Activated T-helper 1 cell treated with anti-CD3 and anti-CD28 coated beads, Interleukin-12 subunit alpha, Interleukin-12 subunit beta, Interleukin-2, Interleukin-4 antibody, amounts not matched to agents 30 ng/mL and 10 ng/mL and 1 ng/mL, durations not matched to agents 14 hours and 24 hours and 36 hours (primary cell): ENCODE measurements at regions of chr4 and their contacts with region 1.

Region 1: DNA sequence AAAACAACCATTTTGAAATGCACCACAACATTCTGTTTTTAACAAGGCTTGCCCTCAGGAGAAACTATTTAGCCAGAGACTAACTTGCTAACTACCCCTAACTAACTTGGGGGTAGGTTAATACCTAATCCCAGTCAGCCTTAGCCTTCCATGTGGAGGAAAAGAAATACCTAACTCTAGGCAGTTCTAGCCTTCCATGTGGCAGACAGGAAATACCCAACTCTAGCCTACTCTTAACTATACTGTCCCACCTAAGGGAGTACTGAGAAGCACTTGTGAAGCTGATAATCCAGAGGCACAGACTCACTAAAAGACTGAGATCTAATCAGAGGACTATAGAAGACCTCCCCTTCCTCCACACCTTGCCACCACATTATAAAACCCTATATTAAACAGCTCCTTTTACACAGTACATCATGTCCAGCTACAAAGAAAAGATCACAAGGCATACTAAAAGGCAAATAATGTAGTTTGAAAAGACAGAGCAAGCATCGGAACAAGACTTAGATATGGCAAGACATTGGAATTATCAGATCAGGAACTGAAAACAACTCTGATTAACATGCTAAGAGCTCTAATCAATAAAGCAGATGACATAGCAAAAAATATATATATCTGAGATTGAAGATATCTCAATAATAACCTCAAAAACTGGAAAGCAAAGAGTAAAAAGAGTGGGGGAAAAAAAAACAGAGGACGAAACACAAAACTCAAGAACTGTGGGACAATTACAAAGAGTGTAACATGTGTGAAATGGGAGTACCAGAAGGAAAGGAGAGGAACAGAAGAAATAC is 52.2 kb downstream of the FRYL start:
- DNase-seq: no peak
- H3K4me3 Mint-ChIP-seq: no peak overlapping the region
- H3K27ac Mint-ChIP-seq: peak overlapping the region; percentile 47
- H3K4me1 Mint-ChIP-seq: peaks cover 88% of the 10 kb centered on the region
- H3K27me3 Mint-ChIP-seq: no peaks in the 10 kb centered on the region

Region 2: GRCh38 chr4:48687313-48688051 is 40.4 kb before region 1 on chr4:
- intact Hi-C with region 1: loop called (anchors 5 kb)
- DNase-seq: no peak
- H3K4me3 Mint-ChIP-seq: no peak overlapping the region
- H3K27ac Mint-ChIP-seq: no peak overlapping the region
- H3K4me1 Mint-ChIP-seq: peaks cover 20% of the 10 kb centered on the region
- H3K27me3 Mint-ChIP-seq: peaks cover 2% of the 10 kb centered on the region

Region 3: GRCh38 chr4:48698029-48698971 is 29.6 kb before region 1 on chr4:
- intact Hi-C with region 1: loop called (anchors 2 kb)
- DNase-seq: no peak
- H3K4me3 Mint-ChIP-seq: no peak overlapping the region
- H3K27ac Mint-ChIP-seq: no peak overlapping the region
- H3K4me1 Mint-ChIP-seq: peaks cover 33% of the 10 kb centered on the region
- H3K27me3 Mint-ChIP-seq: no peaks in the 10 kb centered on the region

Region 4: DNA sequence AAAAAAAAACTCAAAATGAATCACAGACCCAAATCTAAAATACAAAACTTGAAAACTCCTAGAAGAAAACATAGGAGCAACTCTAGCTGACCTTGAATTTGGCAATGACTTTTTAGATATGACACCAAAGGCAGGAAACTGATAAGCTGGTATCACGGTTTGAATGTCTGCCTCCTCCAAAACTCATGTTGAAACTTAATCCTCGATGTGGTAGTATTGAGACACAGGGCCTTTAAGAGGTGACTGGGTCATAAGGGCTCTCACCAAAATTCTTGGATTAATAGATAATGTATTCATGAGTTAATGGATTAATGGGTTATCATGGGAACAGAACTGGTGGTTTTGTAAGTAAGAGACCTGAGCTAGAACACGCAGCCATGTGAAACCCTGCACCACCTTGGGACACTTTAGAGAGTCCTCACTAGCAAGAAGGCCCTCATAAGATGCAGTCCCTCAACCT is 11.7 kb after region 1 on chr4:
- intact Hi-C with region 1: loop called (anchors 2 kb)
- DNase-seq: no peak
- H3K4me3 Mint-ChIP-seq: no peak overlapping the region
- H3K27ac Mint-ChIP-seq: no peak overlapping the region
- H3K4me1 Mint-ChIP-seq: peaks cover 48% of the 10 kb centered on the region
- H3K27me3 Mint-ChIP-seq: no peaks in the 10 kb centered on the region